Activated naive CD4-positive, alpha-beta T cell treated with anti-CD3 and anti-CD28 coated beads for 36 hours (primary cell): ENCODE measurements at regions of chrX and their contacts with region 1.

Region 1: DNA sequence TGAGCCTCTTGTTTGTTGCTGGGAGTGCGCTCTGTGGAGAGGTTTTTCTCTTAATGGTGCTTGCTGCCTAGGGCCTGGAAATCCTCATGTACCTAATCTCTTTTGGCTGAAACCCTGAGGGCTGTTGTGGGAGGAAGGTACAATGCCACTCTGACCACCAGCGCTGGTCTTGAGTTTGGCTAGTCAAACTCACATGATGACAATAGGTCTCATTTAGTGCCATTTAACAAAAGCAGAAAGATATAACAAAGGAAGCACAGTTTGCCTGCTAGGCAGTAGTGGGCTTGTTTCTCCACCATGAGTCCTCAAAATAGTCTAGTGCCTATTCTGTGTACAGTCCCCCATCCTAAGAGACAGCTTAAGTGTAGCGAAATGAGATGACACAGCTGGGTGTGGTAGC is 111.3 kb downstream of the TSPAN7 start:
- DNase-seq: no peak
- H3K4me3 Mint-ChIP-seq: no peak overlapping the region
- H3K27ac Mint-ChIP-seq: no peak overlapping the region
- H3K4me1 Mint-ChIP-seq: peaks cover 4% of the 10 kb centered on the region
- H3K27me3 Mint-ChIP-seq: peaks cover 6% of the 10 kb centered on the region

Region 2: DNA sequence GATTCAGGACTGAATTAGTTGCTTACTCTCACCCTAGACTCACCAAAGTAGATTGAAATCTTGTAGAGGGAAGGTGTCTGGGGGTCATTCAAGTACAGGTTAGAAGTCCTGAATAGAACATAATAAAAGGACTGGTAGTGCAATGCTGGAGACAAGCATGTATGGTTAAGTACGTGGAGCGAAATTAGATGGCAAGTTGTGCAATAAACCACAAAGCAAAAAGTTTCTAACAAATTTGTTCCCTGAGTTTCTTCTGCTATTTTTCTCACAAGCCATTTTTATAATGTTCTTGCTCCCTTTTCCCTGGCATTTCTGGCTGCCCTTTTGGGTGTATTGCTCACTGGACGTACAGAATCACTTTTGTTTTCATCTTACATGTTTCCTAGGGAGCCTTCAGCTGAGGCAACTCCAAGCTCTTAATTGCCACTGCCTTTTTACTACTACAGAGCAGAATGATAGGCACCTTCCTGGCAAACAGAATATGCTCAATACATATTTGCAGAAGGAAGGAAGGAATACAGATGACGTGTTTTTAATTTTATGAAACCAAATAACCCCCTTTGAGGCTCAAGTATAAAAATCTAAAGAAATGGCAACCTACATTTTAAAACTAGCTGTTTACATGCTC is 1077.8 kb before region 1 on chrX:
- CTCF ChIA-PET with region 1: no interaction called
- intact Hi-C with region 1: no loop called
- DNase-seq: no peak
- H3K4me3 Mint-ChIP-seq: no peak overlapping the region
- H3K27ac Mint-ChIP-seq: no peak overlapping the region
- H3K4me1 Mint-ChIP-seq: no peaks in the 10 kb centered on the region
- H3K27me3 Mint-ChIP-seq: no peaks in the 10 kb centered on the region

Region 3: GRCh38 chrX:38347136-38347535 is 325.5 kb before region 1 on chrX:
- CTCF ChIA-PET with region 1: no interaction called
- intact Hi-C with region 1: no loop called
- DNase-seq: no peak
- H3K4me3 Mint-ChIP-seq: no peak overlapping the region
- H3K27ac Mint-ChIP-seq: no peak overlapping the region
- H3K4me1 Mint-ChIP-seq: no peaks in the 10 kb centered on the region
- H3K27me3 Mint-ChIP-seq: peaks cover 2% of the 10 kb centered on the region

Region 4: GRCh38 chrX:38704146-38704882 is 31.7 kb after region 1 on chrX:
- CTCF ChIA-PET with region 1: interaction called, 3 read pairs
- intact Hi-C with region 1: loop called (anchors 5 kb)
- DNase-seq: no peak
- H3K4me3 Mint-ChIP-seq: no peak overlapping the region
- H3K27ac Mint-ChIP-seq: no peak overlapping the region
- H3K4me1 Mint-ChIP-seq: peaks cover 7% of the 10 kb centered on the region
- H3K27me3 Mint-ChIP-seq: no peaks in the 10 kb centered on the region

Region 5: GRCh38 chrX:39848900-39849299 is 1176.3 kb after region 1 on chrX:
- CTCF ChIA-PET with region 1: no interaction called
- intact Hi-C with region 1: no loop called
- DNase-seq: no peak
- H3K4me3 Mint-ChIP-seq: no peak overlapping the region
- H3K27ac Mint-ChIP-seq: no peak overlapping the region
- H3K4me1 Mint-ChIP-seq: peaks cover 23% of the 10 kb centered on the region
- H3K27me3 Mint-ChIP-seq: no peaks in the 10 kb centered on the region